ENCODE measurements at regions of chr11 and their contacts with region 1.

Region 1: DNA sequence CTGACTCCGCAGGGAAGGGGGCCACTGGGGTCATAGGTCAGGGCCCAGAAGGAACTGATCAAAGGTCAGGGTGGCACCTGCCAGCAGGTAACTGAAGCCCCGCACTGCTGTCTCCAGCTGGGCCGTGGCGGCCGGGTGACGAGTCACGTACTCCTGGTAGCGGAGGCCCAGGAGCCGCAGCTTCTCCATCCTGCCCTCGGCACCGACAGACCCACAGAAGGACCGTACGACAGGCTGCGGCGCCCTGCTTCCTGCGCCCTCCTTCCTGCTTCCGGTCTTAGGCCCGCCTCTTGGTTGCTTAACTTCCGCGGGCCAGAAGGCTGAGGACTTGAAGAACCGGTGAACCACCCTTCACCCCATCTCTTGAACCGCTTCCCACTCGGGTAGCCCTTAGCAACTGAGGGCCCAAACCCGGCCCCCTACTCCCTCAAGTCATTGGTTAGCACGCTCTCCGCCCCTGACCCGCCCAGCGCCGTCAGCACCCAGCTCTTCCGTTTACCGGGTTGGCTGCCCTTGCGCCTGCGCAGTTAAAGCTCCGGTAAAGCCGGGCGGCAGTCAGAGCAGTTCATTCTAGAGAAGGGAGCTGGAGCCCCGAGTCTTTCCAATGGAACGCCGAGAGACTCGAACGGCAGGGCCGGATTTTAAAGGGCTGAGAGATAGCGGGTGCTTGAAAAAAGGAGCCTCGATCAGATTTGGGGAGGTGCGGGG is at the start of gene PEX16:
- DNase-seq: peak; percentile 94
- ATAC-seq: peak; percentile 68
- H3K4me3 Mint-ChIP-seq: peak within 1 kb of the TSS; percentile 93
- H3K27ac Mint-ChIP-seq: peak within 1 kb of the TSS; percentile 96
- H3K4me1 Mint-ChIP-seq: peaks cover 32% of the 10 kb centered on the region
- H3K27me3 Mint-ChIP-seq: peaks cover 2% of the 10 kb centered on the region; the same call in 1 of the 2 replicates
- CTCF ChIP-seq: no peak
- total RNA-seq, gene PEX16: 35.8 to 39.3 TPM (median 36.0 TPM) in 3 replicates

Region 2: DNA sequence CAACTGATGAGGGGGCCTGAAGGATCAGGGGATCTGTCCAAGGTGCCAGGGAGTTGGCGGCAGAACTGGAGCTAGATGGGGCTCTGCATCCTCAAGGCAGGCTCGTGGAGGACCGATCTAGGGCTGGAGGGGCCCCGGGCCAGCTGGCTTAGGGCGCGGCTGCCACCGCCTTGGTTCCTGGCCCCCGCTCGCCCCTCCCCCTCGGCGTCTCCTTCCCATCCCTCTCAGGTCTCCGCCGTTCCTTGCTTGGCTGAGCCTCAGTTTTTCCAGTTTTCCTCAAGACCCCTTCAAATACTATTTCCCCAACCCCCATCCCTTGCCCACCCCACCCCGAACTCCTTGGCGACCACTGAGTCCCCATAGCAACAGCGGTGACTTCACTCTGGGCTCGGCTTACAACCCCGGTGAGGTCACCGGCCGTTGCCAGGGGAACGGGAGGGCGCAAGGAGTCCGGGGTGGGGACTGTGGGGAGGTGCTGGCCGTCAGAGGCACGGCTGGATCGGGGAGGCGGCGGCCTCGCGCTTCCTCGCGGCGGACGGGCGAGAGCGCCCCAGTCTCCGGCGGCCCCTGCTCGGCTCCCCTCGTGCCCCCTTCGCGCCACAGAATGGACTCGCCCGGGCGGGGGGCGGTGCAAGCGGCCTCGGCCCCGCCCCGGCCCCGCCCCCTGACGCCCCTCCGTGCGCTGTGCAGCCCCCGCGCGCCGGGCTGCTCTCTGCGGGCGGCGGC is 18.2 kb before region 1 on chr11:
- CTCF ChIA-PET with region 1: interaction called, 33 read pairs
- POLR2A ChIA-PET with region 1: interaction called, 8 read pairs
- DNase-seq: peak; percentile 94
- ATAC-seq: peak; percentile 75
- H3K4me3 Mint-ChIP-seq: peak overlapping the region; percentile 61
- H3K27ac Mint-ChIP-seq: no peak overlapping the region
- H3K4me1 Mint-ChIP-seq: peaks cover 23% of the 10 kb centered on the region
- H3K27me3 Mint-ChIP-seq: peaks cover 6% of the 10 kb centered on the region
- CTCF ChIP-seq: no peak

Region 3: DNA sequence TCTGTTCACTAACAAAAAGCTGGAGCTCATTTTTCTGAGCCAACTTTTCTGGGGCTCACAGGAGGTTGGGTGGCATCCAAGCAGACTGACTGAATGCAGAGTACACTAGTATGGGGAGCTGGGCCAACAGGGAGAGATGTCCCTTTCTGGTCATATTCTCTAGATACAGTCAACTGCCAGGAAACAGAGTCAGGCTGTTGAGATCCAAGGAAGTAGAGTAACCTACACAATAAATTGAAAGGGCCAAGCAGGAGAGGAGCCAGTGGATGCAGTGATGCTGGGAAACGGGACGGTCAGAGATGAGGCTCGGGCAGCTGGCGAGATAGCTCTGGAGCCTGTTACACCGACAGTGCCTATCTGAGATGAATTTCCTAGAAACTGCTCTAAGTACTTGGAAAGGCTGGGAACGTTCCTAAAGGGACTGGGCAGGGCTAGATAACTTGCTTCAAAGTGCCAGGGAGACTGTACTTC is 75.8 kb after region 1 on chr11:
- CTCF ChIA-PET with region 1: interaction called, 4 read pairs
- POLR2A ChIA-PET with region 1: interaction called, 12 read pairs
- DNase-seq: no peak
- ATAC-seq: no peak
- H3K4me3 Mint-ChIP-seq: no peak overlapping the region
- H3K27ac Mint-ChIP-seq: peak overlapping the region; percentile 90
- H3K4me1 Mint-ChIP-seq: peaks cover 52% of the 10 kb centered on the region
- H3K27me3 Mint-ChIP-seq: no peaks in the 10 kb centered on the region
- CTCF ChIP-seq: no peak

Region 4: DNA sequence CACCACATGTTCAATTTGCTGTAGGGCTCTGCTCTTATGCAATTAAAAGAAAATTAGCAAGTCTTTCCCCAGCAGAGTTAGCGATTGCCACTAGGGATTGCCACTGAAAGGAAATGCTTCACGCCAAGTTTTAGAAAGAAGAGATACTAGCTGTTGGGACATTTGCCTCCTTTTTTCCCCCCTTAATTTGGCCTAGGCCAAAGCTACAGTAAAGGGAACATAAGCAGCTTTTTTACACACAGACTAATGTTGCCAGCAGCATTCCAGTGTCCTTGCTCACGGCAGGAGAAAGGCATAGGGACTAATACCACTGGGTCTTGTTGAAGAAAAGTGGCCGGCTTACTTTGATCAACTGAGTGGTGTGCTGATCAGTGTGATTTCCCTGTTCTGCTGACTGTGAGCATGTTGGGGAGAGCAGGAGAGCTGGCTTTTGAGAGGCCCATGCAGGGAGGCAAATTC is 132.3 kb after region 1 on chr11:
- CTCF ChIA-PET with region 1: no interaction called
- POLR2A ChIA-PET with region 1: no interaction called
- DNase-seq: no peak
- ATAC-seq: peak; percentile 87
- H3K4me3 Mint-ChIP-seq: no peak overlapping the region
- H3K27ac Mint-ChIP-seq: peak overlapping the region; percentile 94
- H3K4me1 Mint-ChIP-seq: peaks cover 67% of the 10 kb centered on the region
- H3K27me3 Mint-ChIP-seq: no peaks in the 10 kb centered on the region
- CTCF ChIP-seq: no peak